ENCODE measurements at regions of chr17 and their contacts with region 1.

Region 1: DNA sequence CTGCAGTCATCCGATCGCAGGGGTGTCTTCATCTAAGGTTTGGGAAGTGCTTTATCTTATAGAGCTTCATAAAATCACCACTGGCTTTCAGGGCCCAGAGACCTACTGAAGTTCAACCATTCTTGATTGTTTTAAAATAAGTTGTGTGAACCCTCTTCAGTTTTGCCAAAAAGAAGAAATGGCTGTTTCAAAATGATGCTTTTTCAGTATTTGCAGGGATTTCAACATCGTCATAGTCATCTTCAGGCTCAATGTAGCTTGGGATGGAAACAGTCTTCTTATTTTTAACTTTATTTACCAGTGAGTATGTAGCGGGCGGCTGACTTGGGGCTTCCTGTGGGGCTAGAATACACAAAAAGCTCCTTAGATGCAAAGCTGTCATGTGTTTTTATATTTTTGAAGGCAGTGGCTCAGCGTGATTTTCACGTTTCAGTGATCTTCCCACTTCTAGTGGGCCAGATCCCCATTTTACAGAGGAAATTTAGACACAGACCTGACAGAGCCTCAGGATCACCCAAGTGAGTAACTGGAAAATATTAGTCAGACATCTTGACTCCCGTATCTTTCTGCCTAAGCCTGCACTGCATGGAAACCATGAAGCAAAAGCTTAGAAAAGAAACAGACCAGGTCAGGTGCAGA is 19.1 kb upstream of the ZNF594 start:
- DNase-seq: peak; percentile 62
- ATAC-seq: peak; percentile 65
- H3K4me3 ChIP-seq: peak overlapping the region in 1 of 5 experiments; percentile 4
- H3K4me3 Mint-ChIP-seq: peak overlapping the region; percentile 74
- H3K27ac ChIP-seq: peak overlapping the region; percentile 91
- H3K27ac Mint-ChIP-seq: peak overlapping the region; percentile 93
- H3K4me1 ChIP-seq: peaks cover 64 to 80% of the 10 kb centered on the region in 2 donors
- H3K4me1 Mint-ChIP-seq: peaks cover 75% of the 10 kb centered on the region
- H3K27me3 ChIP-seq: no peaks in the 10 kb centered on the region
- H3K27me3 Mint-ChIP-seq: no peaks in the 10 kb centered on the region
- CTCF ChIP-seq: no peak

Region 2: DNA sequence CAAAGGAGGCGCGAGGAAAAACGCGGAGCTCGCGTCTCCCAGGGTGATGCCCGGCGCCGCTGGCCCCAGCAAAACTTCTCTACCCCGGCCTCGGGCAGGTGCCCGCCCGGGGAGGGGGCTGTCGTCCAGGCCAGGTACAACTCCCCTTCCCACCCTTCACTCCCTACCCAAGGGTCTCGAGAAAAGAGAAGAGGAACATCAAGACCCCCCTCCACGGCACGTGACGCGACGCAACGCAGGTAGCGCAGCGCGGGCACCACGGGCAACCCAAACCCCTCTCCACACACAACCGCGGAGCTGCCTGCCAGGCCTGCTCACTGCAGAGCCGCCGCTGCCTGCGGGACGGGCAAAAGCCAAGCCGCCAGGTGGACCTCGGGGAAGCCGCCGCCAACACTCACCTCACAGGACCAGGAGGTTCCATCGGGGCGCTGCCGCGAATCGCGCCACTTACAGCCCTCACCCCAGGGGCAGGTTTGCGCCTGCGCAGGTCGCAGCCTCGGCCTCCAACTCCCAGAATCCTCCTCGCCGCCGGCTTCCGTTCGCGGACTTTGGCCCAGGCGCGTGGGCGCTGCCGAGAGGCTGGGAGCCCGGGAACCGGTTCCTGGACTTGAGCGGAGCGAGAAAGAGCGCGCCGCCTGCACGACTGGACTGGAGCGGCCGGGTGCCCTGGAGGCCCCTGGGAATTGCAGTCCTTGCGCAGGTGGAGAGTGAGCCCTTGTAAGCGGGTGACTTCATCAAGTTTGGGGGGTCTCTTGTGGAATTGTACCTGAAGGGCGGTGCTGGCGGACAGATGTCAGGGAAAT is 99.1 kb before region 1 on chr17 and contains the start of gene ZNF232:
- CTCF ChIA-PET with region 1: no interaction called
- POLR2A ChIA-PET with region 1: no interaction called
- intact Hi-C with region 1: no loop called
- DNase-seq: peak; percentile 94
- ATAC-seq: peak; percentile 91
- H3K4me3 ChIP-seq: peak within 1 kb of the TSS; percentile 80 to 93 (median 88)
- H3K4me3 Mint-ChIP-seq: peak within 1 kb of the TSS; percentile 86
- H3K27ac ChIP-seq: peak within 1 kb of the TSS; percentile 62 to 74
- H3K27ac Mint-ChIP-seq: peak within 1 kb of the TSS; percentile 70
- H3K4me1 ChIP-seq: peaks cover 15 to 20% of the 10 kb centered on the region in 2 donors
- H3K4me1 Mint-ChIP-seq: peaks cover 25% of the 10 kb centered on the region
- H3K27me3 ChIP-seq: peaks cover 0 to 16% (median 8%) of the 10 kb centered on the region in 4 experiments
- H3K27me3 Mint-ChIP-seq: peaks cover 10% of the 10 kb centered on the region
- CTCF ChIP-seq: no peak
- total RNA-seq, gene ZNF232: 17.4 and 19.3 TPM in 2 replicates

Region 3: GRCh38 chr17:5226940-5227878 is 16.5 kb after region 1 on chr17:
- CTCF ChIA-PET with region 1: interaction called, 303 read pairs
- POLR2A ChIA-PET with region 1: interaction called, 11 read pairs
- intact Hi-C with region 1: loop called (anchors 2 kb)
- DNase-seq: peak; percentile 59
- ATAC-seq: peak; percentile 65
- H3K4me3 ChIP-seq: peak overlapping the region in 3 of 5 experiments; percentile 17 to 59 (median 39)
- H3K4me3 Mint-ChIP-seq: peak overlapping the region; percentile 84
- H3K27ac ChIP-seq: peak overlapping the region; percentile 83 to 97
- H3K27ac Mint-ChIP-seq: peak overlapping the region; percentile 98
- H3K4me1 ChIP-seq: peaks cover 99 to 100% of the 10 kb centered on the region in 2 donors
- H3K4me1 Mint-ChIP-seq: peaks cover 89% of the 10 kb centered on the region
- H3K27me3 ChIP-seq: no peaks in the 10 kb centered on the region
- H3K27me3 Mint-ChIP-seq: no peaks in the 10 kb centered on the region
- CTCF ChIP-seq: no peak

Region 4: GRCh38 chr17:5516060-5516792 is 305.5 kb after region 1 on chr17:
- CTCF ChIA-PET with region 1: no interaction called
- POLR2A ChIA-PET with region 1: no interaction called
- intact Hi-C with region 1: no loop called
- DNase-seq: peak; percentile 27
- ATAC-seq: no peak
- H3K4me3 ChIP-seq: no peak overlapping the region
- H3K4me3 Mint-ChIP-seq: no peak overlapping the region
- H3K27ac ChIP-seq: no peak overlapping the region
- H3K27ac Mint-ChIP-seq: no peak overlapping the region
- H3K4me1 ChIP-seq: peaks cover 5 to 6% of the 10 kb centered on the region in 2 donors
- H3K4me1 Mint-ChIP-seq: peaks cover 16% of the 10 kb centered on the region
- H3K27me3 ChIP-seq: no peaks in the 10 kb centered on the region
- H3K27me3 Mint-ChIP-seq: no peaks in the 10 kb centered on the region
- CTCF ChIP-seq: no peak